ENCODE measurements at regions of chr10 and their contacts with region 1.

Region 1: DNA sequence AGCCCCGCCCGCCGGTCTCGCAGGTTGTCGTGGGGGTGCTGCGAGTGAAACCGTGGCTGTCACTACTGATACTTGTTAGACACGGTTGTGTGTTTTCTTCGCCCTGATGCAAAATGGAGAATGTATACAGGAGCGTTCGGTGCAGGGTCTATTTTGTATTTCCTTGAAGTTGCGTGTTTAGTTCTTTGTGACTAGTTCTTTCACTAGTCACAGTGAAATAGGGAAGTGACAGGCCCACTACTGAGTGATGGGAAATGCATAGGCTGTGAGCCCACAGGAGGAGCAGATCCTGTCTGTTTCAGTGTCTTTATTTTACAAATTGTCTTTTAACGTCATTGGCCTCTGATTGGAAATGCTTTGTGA is 675 bp downstream of the ABRAXAS2 start:
- DNase-seq: peak; percentile 7
- H3K4me3 Mint-ChIP-seq: peak overlapping the region; percentile 85
- H3K27ac Mint-ChIP-seq: peak overlapping the region; percentile 89
- H3K4me1 Mint-ChIP-seq: no peaks in the 10 kb centered on the region
- H3K27me3 Mint-ChIP-seq: no peaks in the 10 kb centered on the region
- CTCF ChIP-seq: no peak

Region 2: GRCh38 chr10:124748166-124748565 is 54.1 kb before region 1 on chr10:
- CTCF ChIA-PET with region 1: no interaction called
- POLR2A ChIA-PET with region 1: interaction called, 12 read pairs
- intact Hi-C with region 1: no loop called
- DNase-seq: no peak
- H3K4me3 Mint-ChIP-seq: no peak overlapping the region
- H3K27ac Mint-ChIP-seq: no peak overlapping the region
- H3K4me1 Mint-ChIP-seq: peaks cover 11% of the 10 kb centered on the region
- H3K27me3 Mint-ChIP-seq: no peaks in the 10 kb centered on the region
- CTCF ChIP-seq: no peak

Region 3: GRCh38 chr10:124791378-124792348 is 10.6 kb before region 1 on chr10 and contains the start of gene EEF1AKMT2:
- CTCF ChIA-PET with region 1: interaction called, 4 read pairs
- POLR2A ChIA-PET with region 1: interaction called, 35 read pairs
- intact Hi-C with region 1: no loop called
- DNase-seq: peak; percentile 85
- H3K4me3 Mint-ChIP-seq: peak within 1 kb of the TSS; percentile 95
- H3K27ac Mint-ChIP-seq: peak within 1 kb of the TSS; percentile 99
- H3K4me1 Mint-ChIP-seq: peaks cover 8% of the 10 kb centered on the region
- H3K27me3 Mint-ChIP-seq: no peaks in the 10 kb centered on the region
- CTCF ChIP-seq: peak; percentile 29
- total RNA-seq, gene EEF1AKMT2: 17.5 and 18.6 TPM in 2 replicates

Region 4: GRCh38 chr10:124916585-124917427 is 114.5 kb after region 1 on chr10:
- CTCF ChIA-PET with region 1: no interaction called
- POLR2A ChIA-PET with region 1: interaction called, 6 read pairs
- intact Hi-C with region 1: loop called (anchors 5 kb)
- DNase-seq: peak; percentile 96
- H3K4me3 Mint-ChIP-seq: peak overlapping the region; percentile 91
- H3K27ac Mint-ChIP-seq: peak overlapping the region; percentile 80
- H3K4me1 Mint-ChIP-seq: peaks cover 21% of the 10 kb centered on the region
- H3K27me3 Mint-ChIP-seq: no peaks in the 10 kb centered on the region
- CTCF ChIP-seq: no peak

Region 5: DNA sequence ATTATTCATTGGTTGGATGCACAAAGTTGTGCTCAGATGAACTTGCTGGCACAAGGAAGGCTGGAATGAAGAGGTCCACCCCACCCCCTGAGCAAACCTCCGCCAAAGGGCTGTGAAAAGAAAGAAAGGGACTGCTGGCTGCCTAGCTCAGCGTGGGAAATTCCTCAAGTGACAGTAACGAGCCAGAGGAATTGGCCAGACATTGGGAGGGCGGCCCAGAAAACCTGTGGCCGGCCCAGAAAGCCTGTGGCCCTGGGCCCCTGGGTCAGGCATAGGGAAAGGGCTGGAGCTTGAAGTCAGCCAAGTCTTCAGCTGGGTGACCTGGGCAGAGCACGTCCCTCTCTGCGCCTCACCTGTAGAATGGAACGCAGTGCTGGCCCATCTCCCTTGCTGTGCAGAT is 388.7 kb after region 1 on chr10:
- CTCF ChIA-PET with region 1: no interaction called
- POLR2A ChIA-PET with region 1: no interaction called
- intact Hi-C with region 1: no loop called
- DNase-seq: no peak
- H3K4me3 Mint-ChIP-seq: no peak overlapping the region
- H3K27ac Mint-ChIP-seq: no peak overlapping the region
- H3K4me1 Mint-ChIP-seq: no peaks in the 10 kb centered on the region
- H3K27me3 Mint-ChIP-seq: peaks cover 13% of the 10 kb centered on the region
- CTCF ChIP-seq: no peak

Measured in MCF 10A (cell line).